ENCODE measurements at regions of chr16 and their contacts with region 1.

Region 1: DNA sequence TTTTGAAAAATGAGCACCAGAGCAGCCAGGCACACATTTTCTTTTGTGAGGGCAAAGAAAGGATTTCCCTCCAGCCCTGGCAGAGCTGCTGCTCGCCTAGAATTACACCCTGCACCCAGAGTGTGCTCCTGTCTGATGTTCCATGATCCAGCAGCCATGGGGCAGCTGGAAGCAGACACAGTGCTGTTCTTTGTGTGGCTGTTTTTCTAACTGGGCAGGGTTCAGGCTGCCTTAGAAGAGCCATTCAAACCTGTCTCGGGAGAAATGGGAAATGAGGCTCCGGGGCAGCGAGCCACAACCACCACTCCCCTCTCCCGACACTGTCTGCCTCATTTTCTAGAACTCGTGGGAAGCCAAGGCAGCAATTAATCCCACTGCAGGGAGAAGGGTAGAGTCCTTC is 28.9 kb downstream of the LITAF start:
- DNase-seq: peak; percentile 3 to 87 (median 76)
- H3K4me3 ChIP-seq: peak overlapping the region in 40 of 59 donors; percentile 3 to 45 (median 25)
- H3K27ac ChIP-seq: peak overlapping the region; percentile 63 to 99 (median 93)
- H3K27me3 ChIP-seq: no peaks in the 10 kb centered on the region
- CTCF ChIP-seq: peak in 11 of 56 donors; percentile 5 to 42 (median 11)

Region 2: DNA sequence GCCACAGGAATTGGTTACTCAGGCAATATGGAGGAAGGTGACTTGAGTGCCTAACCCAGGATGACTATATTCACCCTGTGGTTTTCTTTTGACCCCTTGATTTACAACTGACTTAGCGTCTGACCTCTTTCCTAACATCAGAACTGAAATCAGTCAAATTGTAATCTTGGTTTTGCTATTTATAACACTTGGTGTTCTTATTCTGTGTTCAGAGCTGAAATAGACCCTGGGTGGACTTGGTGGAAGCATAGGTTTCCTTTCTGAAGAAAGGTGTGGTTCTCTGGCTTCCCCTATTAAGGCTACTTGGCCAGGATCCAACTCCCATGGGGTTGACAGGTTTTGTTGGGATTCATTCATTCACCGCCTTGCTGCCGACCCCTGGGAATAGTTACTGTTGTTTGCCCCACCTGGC is 532.7 kb before region 1 on chr16:
- intact Hi-C with region 1: no loop called
- DNase-seq: no peak
- H3K4me3 ChIP-seq: no peak overlapping the region
- H3K27ac ChIP-seq: no peak overlapping the region
- H3K27me3 ChIP-seq: no peaks in the 10 kb centered on the region
- CTCF ChIP-seq: no peak

Region 3: GRCh38 chr16:11497851-11498289 is 59.9 kb before region 1 on chr16:
- intact Hi-C with region 1: loop called in 1 of 2 experiments (anchors 5 kb)
- DNase-seq: no peak
- H3K4me3 ChIP-seq: peak overlapping the region in 1 of 59 donors; percentile 13
- H3K27ac ChIP-seq: peak overlapping the region in 52 of 59 donors; percentile 4 to 85 (median 75)
- H3K27me3 ChIP-seq: no peaks in the 10 kb centered on the region
- CTCF ChIP-seq: no peak

Region 4: DNA sequence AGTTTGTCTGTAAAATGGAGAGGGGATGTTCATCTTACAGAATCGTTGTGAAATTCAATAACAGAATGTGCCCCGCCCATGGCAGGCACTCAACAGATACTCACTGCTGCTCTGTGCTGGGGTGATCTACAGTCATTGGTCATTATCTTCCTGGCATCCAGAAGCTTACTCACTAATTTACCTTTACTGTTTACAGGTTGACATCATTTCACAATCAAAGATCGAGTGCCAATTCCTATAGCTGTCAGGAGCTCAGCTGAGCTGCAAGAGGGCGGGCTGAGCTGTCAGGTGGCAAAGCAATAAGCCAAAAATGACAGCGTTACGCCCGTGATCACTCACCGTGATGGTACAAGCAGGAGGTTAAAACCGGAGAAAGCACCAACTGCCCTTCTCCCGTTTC is 22.3 kb before region 1 on chr16:
- intact Hi-C with region 1: no loop called
- DNase-seq: no peak
- H3K4me3 ChIP-seq: no peak overlapping the region
- H3K27ac ChIP-seq: no peak overlapping the region
- H3K27me3 ChIP-seq: no peaks in the 10 kb centered on the region
- CTCF ChIP-seq: no peak

Region 5: DNA sequence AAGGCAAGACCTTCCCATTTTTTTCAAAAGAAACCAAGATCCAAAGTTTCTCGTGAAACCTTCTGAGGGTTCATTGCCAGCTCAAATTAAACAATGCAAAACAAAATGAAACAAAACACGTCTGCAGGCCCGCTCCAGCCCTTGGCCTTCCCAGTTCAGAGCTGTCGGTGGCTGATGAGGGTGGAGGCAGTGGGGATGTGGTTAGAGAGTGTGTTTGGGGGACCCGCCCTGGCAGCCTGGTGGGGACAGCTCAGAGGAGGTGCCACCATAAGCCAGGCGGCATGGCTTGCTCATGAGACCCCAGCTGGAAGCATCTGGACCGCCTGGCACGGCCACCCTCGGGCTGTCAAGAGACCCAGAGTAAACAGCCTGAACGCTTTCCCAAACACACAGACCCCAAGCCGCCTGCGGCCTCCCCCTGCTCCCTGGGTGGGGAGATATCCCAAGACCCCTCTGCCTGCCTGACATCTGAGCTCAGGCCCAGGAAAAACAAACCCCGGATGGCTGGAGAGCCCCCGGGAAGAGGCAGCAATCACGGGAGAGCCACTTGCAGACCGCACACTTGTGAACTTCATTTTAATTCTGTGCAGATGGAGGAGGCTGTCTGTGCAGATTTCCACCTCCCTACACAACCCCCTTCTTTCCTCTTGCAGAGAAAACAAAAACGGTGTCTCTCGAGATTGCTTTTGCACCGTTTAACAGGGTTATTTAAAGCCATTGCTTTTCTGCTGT is 64.3 kb after region 1 on chr16:
- intact Hi-C with region 1: no loop called
- DNase-seq: no peak
- H3K4me3 ChIP-seq: peak overlapping the region in 38 of 59 donors; percentile 2 to 48 (median 22)
- H3K27ac ChIP-seq: peak overlapping the region in 8 of 59 donors; percentile 13 to 43 (median 28)
- H3K27me3 ChIP-seq: no peaks in the 10 kb centered on the region
- CTCF ChIP-seq: no peak